HEK293 (cell line): ENCODE measurements at regions of chr3 and their contacts with region 1.

Region 1: DNA sequence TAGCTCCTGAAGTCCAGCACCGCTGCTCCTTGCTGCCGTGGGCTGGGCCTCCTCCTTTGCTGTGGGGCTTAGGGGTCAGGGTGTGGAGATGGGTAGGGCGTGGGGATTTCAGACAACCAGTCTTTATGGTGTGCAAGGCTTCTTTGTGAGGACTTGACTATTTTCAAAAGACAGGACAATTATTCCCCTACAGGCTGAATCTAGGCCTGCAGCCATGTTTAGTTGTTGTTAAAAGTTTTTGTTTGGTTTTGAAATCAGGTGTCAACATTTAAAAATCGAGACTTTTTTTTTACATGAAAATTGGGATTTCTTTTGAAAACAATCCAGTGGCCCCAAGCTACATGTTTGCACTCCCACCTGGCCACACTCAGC is 10.6 kb downstream of the RPL32 start:
- H3K4me3 ChIP-seq: no peak overlapping the region
- H3K27ac ChIP-seq: no peak overlapping the region
- H3K4me1 ChIP-seq: no peaks in the 10 kb centered on the region
- CTCF ChIP-seq: no peak

Region 2: DNA sequence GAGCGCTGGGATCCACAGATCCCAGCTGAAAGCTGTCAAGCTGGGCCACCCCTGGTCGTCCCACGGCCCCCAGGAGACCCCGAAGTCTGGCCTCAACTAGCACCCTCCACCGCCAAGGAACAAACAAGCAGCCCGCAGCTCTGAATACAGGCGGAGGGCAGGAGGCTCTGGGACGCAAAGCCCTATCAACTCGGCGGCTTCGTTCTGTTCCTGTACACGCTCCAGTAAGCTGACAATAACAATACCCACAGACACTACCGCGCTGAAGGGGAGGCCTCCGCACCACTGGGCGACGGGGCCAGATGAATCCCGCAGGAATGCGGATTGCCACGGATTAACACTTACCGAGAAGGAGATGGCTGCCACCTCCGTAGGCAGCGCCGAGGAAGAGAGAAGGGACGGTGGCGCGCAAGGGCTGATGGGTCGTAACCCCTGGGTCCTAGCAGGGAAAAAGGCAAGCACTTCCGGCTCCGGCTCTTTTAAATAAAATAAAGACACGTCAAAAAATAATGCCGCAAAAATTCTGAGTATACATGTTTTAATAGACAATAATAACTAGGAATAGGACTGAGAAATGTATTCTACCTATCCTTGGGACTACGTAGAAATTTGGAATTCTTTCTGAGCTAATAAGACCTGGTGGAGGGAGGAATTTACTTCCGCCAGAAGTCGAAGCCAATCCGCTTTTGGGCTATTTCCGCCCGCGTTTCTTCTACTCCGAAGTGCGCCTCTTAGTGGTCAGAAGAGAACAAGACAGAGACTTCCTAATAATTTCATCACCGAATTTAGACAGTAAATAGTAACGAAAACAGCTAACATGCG is 10.6 kb after region 1 on chr3 and contains the start of gene RPL32:
- CTCF ChIA-PET with region 1: interaction called, 10 read pairs
- POLR2A ChIA-PET with region 1: interaction called, 22 read pairs
- H3K4me3 ChIP-seq: peak within 1 kb of the TSS; percentile 93
- H3K27ac ChIP-seq: peak within 1 kb of the TSS; percentile 98
- H3K4me1 ChIP-seq: no peaks in the 10 kb centered on the region
- CTCF ChIP-seq: peak; percentile 56; the same call in 1 of the 2 replicates

Region 3: DNA sequence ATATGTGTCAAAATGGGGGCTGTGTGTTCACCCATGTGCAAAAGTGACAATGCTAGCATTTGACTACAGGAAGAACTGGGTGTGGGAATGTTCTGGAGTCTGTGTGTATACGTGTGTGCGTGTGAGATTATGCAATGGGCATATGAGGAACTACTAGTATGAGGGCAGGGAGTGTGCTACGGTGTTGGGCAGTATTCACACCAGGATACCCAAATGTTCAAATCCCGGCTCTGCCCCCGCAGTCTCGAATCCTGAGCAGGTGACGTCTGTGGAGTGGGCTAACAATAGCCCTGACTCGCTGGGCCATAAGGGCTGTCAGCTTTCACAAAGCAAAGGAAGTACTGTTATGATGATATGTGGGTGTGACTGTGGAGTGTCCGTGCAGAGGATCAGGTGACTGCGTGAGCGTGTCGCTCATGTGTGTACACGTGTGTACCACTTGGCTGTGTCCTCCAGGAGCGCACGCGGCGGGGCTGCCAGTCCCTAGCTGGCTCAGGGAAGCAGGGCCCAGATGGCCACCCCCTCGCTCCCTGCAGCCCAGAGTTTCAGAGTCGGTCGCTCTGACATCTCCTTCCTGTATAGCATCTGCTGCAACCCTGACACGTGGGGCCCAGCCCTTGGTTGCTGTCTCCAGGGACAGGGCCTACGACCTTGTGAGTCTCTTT is 215.3 kb after region 1 on chr3:
- CTCF ChIA-PET with region 1: no interaction called
- POLR2A ChIA-PET with region 1: no interaction called
- H3K4me3 ChIP-seq: no peak overlapping the region
- H3K27ac ChIP-seq: no peak overlapping the region
- H3K4me1 ChIP-seq: no peaks in the 10 kb centered on the region
- CTCF ChIP-seq: no peak